CD8-positive, alpha-beta T cell (primary cell): ENCODE measurements at regions of chr3 and their contacts with region 1.

Region 1: DNA sequence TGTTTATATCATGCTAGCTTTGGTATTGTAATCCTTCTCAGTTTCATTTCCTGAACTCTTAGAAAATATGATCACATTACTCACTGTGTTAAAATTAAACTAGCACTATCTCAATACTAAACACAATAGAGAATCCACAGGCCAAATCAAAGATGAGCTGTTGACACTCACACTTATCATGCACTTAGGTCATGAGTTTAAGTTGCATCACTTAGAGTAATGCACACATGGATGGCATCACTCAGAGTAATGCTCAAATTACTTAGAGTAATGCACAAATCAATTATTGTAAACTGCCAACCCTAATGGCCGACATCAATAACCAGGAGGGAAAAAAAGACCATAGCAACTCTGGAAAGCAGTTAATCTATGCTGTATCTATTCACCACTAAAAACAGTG is 40.0 kb upstream of the MCF2L2 start:
- DNase-seq: no peak
- ATAC-seq: no peak
- H3K4me3 ChIP-seq: no peak overlapping the region
- H3K4me3 Mint-ChIP-seq: no peak overlapping the region
- H3K27ac ChIP-seq: no peak overlapping the region
- H3K27ac Mint-ChIP-seq: no peak overlapping the region
- H3K4me1 ChIP-seq: peaks cover 3% of the 10 kb centered on the region
- H3K4me1 Mint-ChIP-seq: peaks cover 5% of the 10 kb centered on the region
- H3K27me3 ChIP-seq: no peaks in the 10 kb centered on the region
- H3K27me3 Mint-ChIP-seq: peaks cover 2% of the 10 kb centered on the region
- CTCF ChIP-seq: no peak

Region 2: GRCh38 chr3:183481582-183481981 is 13.2 kb after region 1 on chr3:
- CTCF ChIA-PET with region 1: interaction called, 12 read pairs
- POLR2A ChIA-PET with region 1: interaction called, 3 read pairs
- intact Hi-C with region 1: no loop called
- DNase-seq: no peak
- ATAC-seq: no peak
- H3K4me3 ChIP-seq: no peak overlapping the region
- H3K4me3 Mint-ChIP-seq: no peak overlapping the region
- H3K27ac ChIP-seq: no peak overlapping the region
- H3K27ac Mint-ChIP-seq: no peak overlapping the region
- H3K4me1 ChIP-seq: no peaks in the 10 kb centered on the region
- H3K4me1 Mint-ChIP-seq: peaks cover 3% of the 10 kb centered on the region
- H3K27me3 ChIP-seq: no peaks in the 10 kb centered on the region
- H3K27me3 Mint-ChIP-seq: no peaks in the 10 kb centered on the region
- CTCF ChIP-seq: no peak

Region 3: GRCh38 chr3:183515968-183516851 is 47.8 kb after region 1 on chr3:
- CTCF ChIA-PET with region 1: no interaction called
- POLR2A ChIA-PET with region 1: no interaction called
- intact Hi-C with region 1: loop called in 1 of 2 experiments (anchors 5 kb)
- DNase-seq: peak; percentile 34 to 91 (median 71)
- ATAC-seq: peak; percentile 72
- H3K4me3 ChIP-seq: no peak overlapping the region
- H3K4me3 Mint-ChIP-seq: peak overlapping the region; percentile 24
- H3K27ac ChIP-seq: peak overlapping the region; percentile 56 to 68
- H3K27ac Mint-ChIP-seq: peak overlapping the region; percentile 92
- H3K4me1 ChIP-seq: peaks cover 66% of the 10 kb centered on the region
- H3K4me1 Mint-ChIP-seq: peaks cover 76% of the 10 kb centered on the region
- H3K27me3 ChIP-seq: no peaks in the 10 kb centered on the region
- H3K27me3 Mint-ChIP-seq: no peaks in the 10 kb centered on the region
- CTCF ChIP-seq: peak; percentile 31

Region 4: GRCh38 chr3:183591881-183592521 is 123.6 kb after region 1 on chr3:
- CTCF ChIA-PET with region 1: interaction called, 33 read pairs
- POLR2A ChIA-PET with region 1: no interaction called
- intact Hi-C with region 1: loop called (anchors 1 kb)
- DNase-seq: peak in 3 of 9 experiments; percentile 7 to 56 (median 38)
- ATAC-seq: no peak
- H3K4me3 ChIP-seq: no peak overlapping the region
- H3K4me3 Mint-ChIP-seq: peak overlapping the region; percentile 71
- H3K27ac ChIP-seq: no peak overlapping the region
- H3K27ac Mint-ChIP-seq: no peak overlapping the region
- H3K4me1 ChIP-seq: peaks cover 21% of the 10 kb centered on the region
- H3K4me1 Mint-ChIP-seq: peaks cover 24% of the 10 kb centered on the region
- H3K27me3 ChIP-seq: no peaks in the 10 kb centered on the region
- H3K27me3 Mint-ChIP-seq: no peaks in the 10 kb centered on the region
- CTCF ChIP-seq: no peak